Common myeloid progenitor, CD34-positive (primary cell): ENCODE measurements at regions of chr15 and their contacts with region 1.

Region 1: GRCh38 chr15:68154923-68155559 is 50.1 kb downstream of the CALML4 start:
- DNase-seq: peak; percentile 69 to 85 (median 82)
- H3K4me3 ChIP-seq: no peak overlapping the region
- H3K27ac ChIP-seq: peak overlapping the region in 1 of 2 experiments; percentile 43
- H3K4me1 ChIP-seq: no peaks in the 10 kb centered on the region
- H3K27me3 ChIP-seq: no peaks in the 10 kb centered on the region

Region 2: DNA sequence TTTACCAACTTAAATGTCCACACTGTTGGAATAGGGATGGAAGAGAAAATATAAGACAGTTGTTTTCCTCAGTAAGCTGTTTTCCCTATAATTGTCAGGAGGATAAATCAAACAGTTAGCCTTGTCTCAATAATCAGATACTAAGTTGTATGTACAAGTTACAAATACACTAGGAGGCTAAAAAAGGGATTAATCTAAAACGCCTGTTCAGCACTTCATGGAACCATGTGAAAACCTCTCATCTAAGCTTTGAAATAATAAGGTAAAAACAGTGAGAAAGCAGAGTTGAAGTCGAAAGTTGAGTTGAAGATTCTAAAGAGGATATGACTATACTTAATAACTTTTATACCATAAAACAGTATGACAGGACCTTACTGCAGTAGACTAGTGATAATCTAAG is 11.9 kb before region 1 on chr15:
- CTCF ChIA-PET with region 1: interaction called, 11 read pairs
- POLR2A ChIA-PET with region 1: no interaction called
- DNase-seq: no peak
- H3K4me3 ChIP-seq: no peak overlapping the region
- H3K27ac ChIP-seq: no peak overlapping the region
- H3K4me1 ChIP-seq: no peaks in the 10 kb centered on the region
- H3K27me3 ChIP-seq: no peaks in the 10 kb centered on the region

Region 3: DNA sequence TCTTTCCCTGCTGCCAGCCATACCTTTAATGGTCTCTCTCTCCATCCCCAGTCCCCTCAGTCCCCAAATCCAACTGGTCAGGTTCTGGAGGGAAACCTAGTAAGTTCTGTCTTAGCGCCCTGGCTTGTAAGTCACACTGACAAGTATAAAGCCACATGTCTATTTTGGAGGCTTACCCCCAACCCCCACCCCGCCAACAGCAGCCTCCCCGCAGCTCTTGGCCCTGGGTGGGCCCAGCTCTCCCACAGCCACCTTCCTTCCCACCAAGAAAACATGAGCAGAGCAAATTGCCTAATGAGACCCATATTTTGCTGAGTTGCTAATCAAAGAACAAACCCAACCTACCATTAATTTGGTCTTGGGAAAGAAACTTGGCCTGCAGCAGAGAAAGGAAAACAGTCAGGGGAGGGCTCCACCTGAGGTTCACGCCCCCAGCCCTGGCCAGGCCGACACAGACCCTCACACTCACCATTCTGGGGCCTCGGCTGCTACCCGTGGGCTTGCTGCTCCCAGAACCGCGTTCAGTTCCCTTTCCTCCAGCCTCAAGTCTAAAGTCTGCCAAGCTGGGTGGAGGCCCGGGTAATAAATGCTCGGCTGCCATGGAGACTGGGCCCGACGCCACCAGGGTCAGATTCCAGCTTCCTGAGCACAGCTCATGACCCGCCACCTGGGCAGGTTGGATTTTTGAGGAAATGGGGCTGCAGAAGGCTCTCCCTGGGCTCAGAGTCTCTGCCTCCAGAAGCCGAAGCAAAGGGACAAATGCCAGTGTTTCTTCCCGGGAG is 49.9 kb after region 1 on chr15 and contains the start of gene CALML4:
- CTCF ChIA-PET with region 1: no interaction called
- POLR2A ChIA-PET with region 1: no interaction called
- DNase-seq: peak in 2 of 3 donors; percentile 58 to 67
- H3K4me3 ChIP-seq: peak within 1 kb of the TSS in 6 of 7 experiments; percentile 19 to 61 (median 42)
- H3K27ac ChIP-seq: peak within 1 kb of the TSS in 1 of 2 experiments; percentile 58
- H3K4me1 ChIP-seq: peaks cover 5 to 58% (median 53%) of the 10 kb centered on the region in 4 experiments
- H3K27me3 ChIP-seq: no peaks in the 10 kb centered on the region